Panc1 (cell line): ENCODE measurements at regions of chr2 and their contacts with region 1.

Region 1: DNA sequence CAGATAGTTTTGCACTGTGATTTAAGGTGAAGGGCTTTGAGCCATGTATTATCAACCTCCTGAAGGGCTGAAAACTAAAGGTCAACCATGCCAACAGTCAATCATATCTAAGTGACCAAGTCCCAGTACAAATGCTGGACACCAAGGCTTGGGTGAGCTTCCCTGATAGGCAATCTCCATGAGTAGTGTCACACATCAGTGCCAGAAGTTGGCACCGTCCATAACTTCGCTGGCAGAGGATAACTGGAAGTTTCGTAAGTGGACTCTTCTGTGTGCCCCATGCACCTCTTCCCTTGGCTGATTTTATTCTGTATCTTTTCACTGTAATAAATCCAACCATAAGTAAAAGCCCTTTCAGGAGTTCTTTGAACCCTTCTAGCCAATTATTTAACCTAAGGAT is 13.2 kb downstream of the REV1 start:
- DNase-seq: no peak
- ATAC-seq: no peak
- H3K4me3 ChIP-seq: no peak overlapping the region
- H3K27ac ChIP-seq: no peak overlapping the region
- H3K4me1 ChIP-seq: peaks cover 20% of the 10 kb centered on the region
- H3K27me3 ChIP-seq: no peaks in the 10 kb centered on the region
- CTCF ChIP-seq: no peak

Region 2: GRCh38 chr2:98078701-98079100 is 1397.9 kb before region 1 on chr2:
- CTCF ChIA-PET with region 1: no interaction called
- POLR2A ChIA-PET with region 1: no interaction called
- in situ Hi-C with region 1: no loop called
- intact Hi-C with region 1: no loop called
- DNase-seq: no peak
- ATAC-seq: no peak
- H3K4me3 ChIP-seq: no peak overlapping the region
- H3K27ac ChIP-seq: no peak overlapping the region
- H3K4me1 ChIP-seq: no peaks in the 10 kb centered on the region
- H3K27me3 ChIP-seq: no peaks in the 10 kb centered on the region
- CTCF ChIP-seq: no peak

Region 3: DNA sequence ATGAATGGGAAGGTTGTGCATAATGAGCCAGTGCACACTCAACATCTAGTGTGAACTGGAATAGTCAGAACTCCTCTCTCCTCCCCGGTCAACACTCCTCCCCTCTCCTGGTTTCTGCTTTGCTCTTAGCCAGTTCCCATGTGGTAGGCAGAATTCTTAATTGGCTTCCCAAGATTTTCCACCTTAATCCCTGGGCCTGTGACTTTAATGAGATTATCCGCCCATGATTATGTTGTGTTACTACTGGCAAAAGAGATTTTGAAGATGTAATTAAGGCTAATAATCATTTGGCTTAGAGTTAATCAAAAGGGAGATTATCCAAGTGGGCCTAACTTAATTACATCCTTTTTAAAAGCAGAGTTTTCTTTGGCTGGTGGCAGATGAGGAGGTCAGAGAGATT is 47.4 kb after region 1 on chr2:
- CTCF ChIA-PET with region 1: interaction called, 13 read pairs
- POLR2A ChIA-PET with region 1: no interaction called
- in situ Hi-C with region 1: no loop called
- intact Hi-C with region 1: no loop called
- DNase-seq: no peak
- ATAC-seq: no peak
- H3K4me3 ChIP-seq: no peak overlapping the region
- H3K27ac ChIP-seq: no peak overlapping the region
- H3K4me1 ChIP-seq: no peaks in the 10 kb centered on the region
- H3K27me3 ChIP-seq: no peaks in the 10 kb centered on the region; the same call in 1 of the 2 replicates
- CTCF ChIP-seq: no peak